ENCODE measurements at regions of chr3 and their contacts with region 1.

Region 1: GRCh38 chr3:102699819-102700140 is 265.0 kb downstream of the ZPLD1 start:
- DNase-seq: peak in 3 of 5 donors; percentile 10 to 35 (median 25)
- ATAC-seq: peak; percentile 92 to 98 (median 96)
- H3K4me3 ChIP-seq: no peak overlapping the region
- H3K27ac ChIP-seq: peak overlapping the region in 10 of 12 donors; percentile 24 to 84 (median 66)
- H3K4me1 ChIP-seq: peaks cover 0 to 10% (median 0%) of the 10 kb centered on the region in 12 donors
- H3K27me3 ChIP-seq: no peaks in the 10 kb centered on the region
- CTCF ChIP-seq: no peak
- POLR2A ChIP-seq: no peak

Region 2: GRCh38 chr3:102733791-102734574 is 34.2 kb after region 1 on chr3:
- intact Hi-C with region 1: loop called in 1 of 10 experiments (anchors 5 kb)
- DNase-seq: no peak
- ATAC-seq: no peak
- H3K4me3 ChIP-seq: no peak overlapping the region
- H3K27ac ChIP-seq: no peak overlapping the region
- H3K4me1 ChIP-seq: peaks cover 0 to 8% (median 0%) of the 10 kb centered on the region in 12 donors
- H3K27me3 ChIP-seq: no peaks in the 10 kb centered on the region
- CTCF ChIP-seq: no peak
- POLR2A ChIP-seq: no peak

Region 3: DNA sequence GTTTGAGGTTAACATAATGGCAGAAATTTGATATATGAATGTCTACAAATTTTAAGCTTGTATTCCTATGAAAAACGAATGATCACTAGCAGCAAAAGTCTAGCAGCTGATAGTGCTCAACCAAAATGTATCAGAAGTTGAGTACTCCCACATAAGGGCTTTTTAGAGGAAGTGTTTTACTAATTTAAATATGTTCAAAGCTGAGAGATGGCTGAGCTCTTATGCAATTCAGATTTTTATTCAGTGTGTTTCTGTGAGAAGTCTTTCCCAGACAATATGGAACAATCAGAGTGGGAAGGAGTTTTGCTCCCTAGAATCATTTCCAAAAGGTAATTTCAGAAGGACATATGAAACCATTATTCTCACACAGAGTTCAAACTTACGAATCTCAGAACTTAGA is 62.0 kb after region 1 on chr3:
- intact Hi-C with region 1: no loop called
- DNase-seq: no peak
- ATAC-seq: no peak
- H3K4me3 ChIP-seq: no peak overlapping the region
- H3K27ac ChIP-seq: no peak overlapping the region
- H3K4me1 ChIP-seq: no peaks in the 10 kb centered on the region
- H3K27me3 ChIP-seq: no peaks in the 10 kb centered on the region
- CTCF ChIP-seq: no peak
- POLR2A ChIP-seq: no peak

Measured in heart left ventricle (tissue), 16 donors.